ENCODE measurements at regions of chr17 and their contacts with region 1.

Region 1: DNA sequence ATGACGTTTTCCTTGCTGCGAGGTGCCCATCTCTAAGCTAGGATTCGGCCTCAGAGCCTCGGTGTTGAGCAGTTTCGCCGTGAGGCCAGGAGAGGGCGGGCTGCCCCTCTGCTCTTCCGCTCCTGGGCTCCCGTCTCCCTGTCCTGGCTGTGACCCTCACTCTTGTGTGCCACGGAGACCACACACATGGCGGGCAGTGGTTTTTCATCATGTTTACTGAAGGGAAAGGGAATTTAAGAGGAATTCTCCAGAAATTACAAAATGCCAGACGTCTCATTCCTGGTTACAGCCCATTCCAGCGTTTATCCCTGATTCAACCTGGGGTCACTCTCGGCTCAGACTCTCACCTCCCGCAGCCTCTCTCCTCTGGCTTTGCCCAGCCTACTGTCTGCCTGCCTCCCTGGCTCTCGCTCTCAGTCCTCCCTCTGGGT is 96.8 kb upstream of the ELAC2 start:
- DNase-seq: peak; percentile 69
- H3K4me3 ChIP-seq: peak overlapping the region in 1 of 2 experiments; percentile 38; a peak in 1 of 4 replicates
- H3K27ac ChIP-seq: no peak overlapping the region
- H3K4me1 ChIP-seq: no peaks in the 10 kb centered on the region; a peak in 1 of 4 replicates
- H3K27me3 ChIP-seq: peaks cover 40% of the 10 kb centered on the region
- CTCF ChIP-seq: peak; percentile 77
- EP300 ChIP-seq: no peak
- RAD21 ChIP-seq: peak; percentile 73

Region 2: DNA sequence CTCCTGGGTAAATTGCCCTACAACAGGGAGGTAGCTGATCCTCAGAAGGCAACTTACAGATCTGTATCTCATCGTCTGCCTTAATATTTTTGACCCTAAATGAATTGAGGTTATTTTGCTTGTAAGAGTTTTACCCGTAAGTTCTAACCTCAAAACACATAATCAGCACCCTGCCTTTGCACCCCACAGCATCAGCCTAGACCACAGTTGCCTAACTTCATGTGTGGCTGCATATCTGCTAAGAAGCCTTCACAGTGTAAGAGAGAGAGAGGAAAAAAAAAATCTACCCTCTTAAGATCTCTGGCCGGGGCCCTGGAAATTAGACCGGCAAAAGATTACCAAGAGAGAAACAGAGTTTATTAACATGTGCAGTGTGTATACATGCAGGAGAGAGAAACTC is 248.4 kb before region 1 on chr17:
- CTCF ChIA-PET with region 1: no interaction called
- POLR2A ChIA-PET with region 1: no interaction called
- DNase-seq: no peak
- H3K4me3 ChIP-seq: no peak overlapping the region
- H3K27ac ChIP-seq: no peak overlapping the region
- H3K4me1 ChIP-seq: no peaks in the 10 kb centered on the region
- H3K27me3 ChIP-seq: no peaks in the 10 kb centered on the region
- CTCF ChIP-seq: no peak
- EP300 ChIP-seq: no peak
- RAD21 ChIP-seq: no peak

Region 3: DNA sequence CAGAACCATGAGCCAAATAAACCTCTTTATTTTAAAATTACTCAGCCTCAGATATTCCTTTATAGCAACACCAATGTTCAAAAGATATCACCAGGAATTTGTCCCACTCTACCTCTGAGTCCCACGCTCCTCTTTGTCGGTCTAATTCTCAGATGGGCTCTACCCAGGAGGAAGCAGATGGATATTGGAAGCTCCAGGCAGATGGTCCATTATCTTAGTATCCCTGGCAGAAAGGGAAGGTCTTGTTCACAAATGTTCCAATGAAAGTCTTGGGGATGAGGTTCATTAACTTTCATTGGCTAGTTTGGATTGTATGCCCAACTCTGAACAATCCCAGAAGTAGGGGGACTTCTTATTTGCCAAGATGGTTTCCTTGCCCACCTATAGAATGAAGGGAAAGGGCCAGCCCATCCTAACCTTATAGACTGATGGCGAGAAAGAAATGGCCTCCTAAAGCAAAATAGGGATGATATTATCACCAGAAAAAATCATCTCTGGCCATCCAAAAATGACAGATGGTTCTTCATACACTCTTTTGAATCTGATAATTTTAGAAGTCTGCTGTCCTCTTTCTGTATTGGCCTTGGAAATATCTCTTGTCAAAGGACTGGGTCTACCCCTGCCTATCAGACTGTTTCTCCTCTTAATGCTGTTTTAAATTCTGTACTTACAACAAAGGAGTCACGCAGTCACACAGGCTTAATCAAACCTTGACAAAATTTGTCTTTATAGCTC is 75.5 kb before region 1 on chr17:
- CTCF ChIA-PET with region 1: interaction called, 14 read pairs
- POLR2A ChIA-PET with region 1: no interaction called
- DNase-seq: no peak
- H3K4me3 ChIP-seq: no peak overlapping the region
- H3K27ac ChIP-seq: no peak overlapping the region
- H3K4me1 ChIP-seq: peaks cover 0 to 3% of the 10 kb centered on the region in 2 experiments; a peak in 2 of 4 replicates
- H3K27me3 ChIP-seq: peaks cover 19% of the 10 kb centered on the region; the same call in 1 of the 2 replicates
- CTCF ChIP-seq: no peak
- EP300 ChIP-seq: no peak
- RAD21 ChIP-seq: no peak

Region 4: GRCh38 chr17:13129356-13129755 is 14.7 kb after region 1 on chr17:
- CTCF ChIA-PET with region 1: interaction called, 12 read pairs
- POLR2A ChIA-PET with region 1: no interaction called
- DNase-seq: no peak
- H3K4me3 ChIP-seq: no peak overlapping the region
- H3K27ac ChIP-seq: no peak overlapping the region
- H3K4me1 ChIP-seq: no peaks in the 10 kb centered on the region
- H3K27me3 ChIP-seq: peaks cover 16% of the 10 kb centered on the region
- CTCF ChIP-seq: no peak
- EP300 ChIP-seq: no peak
- RAD21 ChIP-seq: no peak

Measured in SK-N-SH (cell line).